ENCODE measurements at regions of chr5 and their contacts with region 1.

Region 1: GRCh38 chr5:54959673-54960418 is 25.5 kb downstream of the ESM1 start:
- DNase-seq: peak; percentile 72
- ATAC-seq: no peak
- H3K4me3 Mint-ChIP-seq: no peak overlapping the region
- H3K27ac Mint-ChIP-seq: no peak overlapping the region
- H3K4me1 Mint-ChIP-seq: peaks cover 2% of the 10 kb centered on the region
- H3K27me3 Mint-ChIP-seq: peaks cover 4% of the 10 kb centered on the region
- CTCF ChIP-seq: peak; percentile 53

Region 2: GRCh38 chr5:54969856-54970828 is 10.3 kb after region 1 on chr5:
- CTCF ChIA-PET with region 1: interaction called, 22 read pairs
- POLR2A ChIA-PET with region 1: interaction called, 3 read pairs
- intact Hi-C with region 1: no loop called
- DNase-seq: no peak
- ATAC-seq: no peak
- H3K4me3 Mint-ChIP-seq: no peak overlapping the region
- H3K27ac Mint-ChIP-seq: no peak overlapping the region
- H3K4me1 Mint-ChIP-seq: no peaks in the 10 kb centered on the region
- H3K27me3 Mint-ChIP-seq: no peaks in the 10 kb centered on the region
- CTCF ChIP-seq: no peak

Region 3: DNA sequence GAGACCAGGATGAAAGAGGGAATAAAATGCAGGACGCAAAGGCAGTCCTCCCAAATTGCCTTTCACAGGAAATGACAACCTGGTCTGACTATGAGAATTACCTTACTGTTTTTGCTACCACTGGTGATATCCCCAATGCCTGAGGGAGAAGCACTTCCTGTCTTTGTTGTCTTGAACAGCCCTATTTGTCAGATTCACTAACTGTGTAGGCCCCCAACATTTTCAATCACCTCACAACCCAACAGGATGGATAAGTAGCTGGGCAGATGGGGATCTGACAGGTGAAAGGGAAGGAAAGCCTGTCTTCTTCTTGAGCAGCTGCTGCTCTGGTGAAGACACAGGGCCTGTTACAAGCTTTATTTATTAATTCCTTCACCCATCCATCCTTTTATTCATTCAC is 15.9 kb after region 1 on chr5:
- CTCF ChIA-PET with region 1: interaction called, 22 read pairs
- POLR2A ChIA-PET with region 1: interaction called, 3 read pairs
- intact Hi-C with region 1: no loop called
- DNase-seq: no peak
- ATAC-seq: no peak
- H3K4me3 Mint-ChIP-seq: no peak overlapping the region
- H3K27ac Mint-ChIP-seq: no peak overlapping the region
- H3K4me1 Mint-ChIP-seq: peaks cover 2% of the 10 kb centered on the region
- H3K27me3 Mint-ChIP-seq: peaks cover 1% of the 10 kb centered on the region
- CTCF ChIP-seq: no peak

Region 4: GRCh38 chr5:55159763-55160492 is 200.1 kb after region 1 on chr5 and contains the start of gene GPX8:
- CTCF ChIA-PET with region 1: interaction called, 11 read pairs
- POLR2A ChIA-PET with region 1: no interaction called
- intact Hi-C with region 1: no loop called
- DNase-seq: peak; percentile 20
- ATAC-seq: peak; percentile 37
- H3K4me3 Mint-ChIP-seq: no peak within 1 kb of the TSS
- H3K27ac Mint-ChIP-seq: no peak within 1 kb of the TSS
- H3K4me1 Mint-ChIP-seq: no peaks in the 10 kb centered on the region
- H3K27me3 Mint-ChIP-seq: peaks cover 20% of the 10 kb centered on the region
- CTCF ChIP-seq: peak; percentile 67
- total RNA-seq, gene GPX8: not detected

Region 5: DNA sequence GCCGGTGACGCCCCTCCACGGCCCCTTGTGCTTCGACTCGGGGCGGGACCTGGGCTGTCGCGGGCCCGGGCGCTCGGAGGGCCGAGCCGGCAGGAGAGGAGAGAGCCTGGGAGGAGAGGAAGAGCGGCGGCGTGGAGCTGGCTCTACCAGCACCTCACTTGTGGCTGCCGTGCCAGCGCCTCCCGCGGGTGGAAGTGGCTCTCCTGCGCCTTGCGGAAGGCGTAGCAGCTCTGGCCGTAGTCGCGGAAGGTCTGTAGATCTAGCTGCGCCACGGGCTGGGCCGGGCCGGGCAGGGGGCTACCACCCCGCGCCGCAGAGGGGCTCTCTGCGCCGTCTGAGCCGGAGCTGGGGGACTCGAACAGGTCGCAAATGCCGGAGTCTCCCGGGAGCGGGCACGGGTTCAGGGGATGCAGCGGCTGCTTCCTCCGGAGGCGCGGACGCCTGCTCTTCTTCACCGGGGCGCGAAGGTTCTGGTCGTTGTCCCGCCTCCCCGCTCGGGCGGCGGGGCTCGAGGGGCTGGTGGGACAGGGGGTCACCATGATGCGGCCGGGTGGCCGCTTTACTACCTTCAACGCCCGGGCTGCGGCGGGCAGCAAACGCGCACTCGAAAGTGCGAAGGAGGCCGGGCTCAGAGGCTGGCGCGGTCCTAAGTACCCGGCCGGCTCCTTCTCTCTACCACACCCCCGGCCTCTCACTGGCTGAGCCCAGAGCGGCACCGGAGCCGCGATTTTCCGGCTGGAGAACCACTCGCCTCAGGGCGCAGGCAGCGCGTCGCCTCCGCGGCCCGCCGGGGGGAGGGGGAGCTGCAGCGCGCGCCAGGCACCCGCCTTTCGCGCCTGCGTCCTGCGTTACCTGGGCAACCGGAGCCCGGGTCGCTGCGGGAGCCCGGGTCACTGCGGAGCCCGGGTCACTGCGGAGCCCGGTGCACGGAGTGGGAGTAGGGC is 273.4 kb after region 1 on chr5 and contains the start of gene CCNO:
- CTCF ChIA-PET with region 1: no interaction called
- POLR2A ChIA-PET with region 1: no interaction called
- intact Hi-C with region 1: no loop called
- DNase-seq: peak; percentile 73
- ATAC-seq: peak; percentile 88
- H3K4me3 Mint-ChIP-seq: peak within 1 kb of the TSS; percentile 75
- H3K27ac Mint-ChIP-seq: no peak within 1 kb of the TSS
- H3K4me1 Mint-ChIP-seq: peaks cover 19% of the 10 kb centered on the region
- H3K27me3 Mint-ChIP-seq: peaks cover 70% of the 10 kb centered on the region
- CTCF ChIP-seq: no peak
- total RNA-seq, gene CCNO: not detected

Region 6: GRCh38 chr5:55387874-55388273 is 428.0 kb after region 1 on chr5:
- CTCF ChIA-PET with region 1: no interaction called
- POLR2A ChIA-PET with region 1: no interaction called
- intact Hi-C with region 1: no loop called
- DNase-seq: no peak
- ATAC-seq: no peak
- H3K4me3 Mint-ChIP-seq: no peak overlapping the region
- H3K27ac Mint-ChIP-seq: no peak overlapping the region
- H3K4me1 Mint-ChIP-seq: peaks cover 21% of the 10 kb centered on the region
- H3K27me3 Mint-ChIP-seq: no peaks in the 10 kb centered on the region
- CTCF ChIP-seq: no peak

Measured in activated CD8-positive, alpha-beta T cell treated with anti-CD3 and anti-CD28 coated beads for 36 hours (primary cell).